GM13976 (cell line): ENCODE measurements at regions of chr5 and their contacts with region 1.

Region 1: GRCh38 chr5:138138949-138139780 is at the start of gene NME5:
- DNase-seq: peak; percentile 79
- CTCF ChIP-seq: no peak

Region 2: GRCh38 chr5:138077065-138077696 is 62.0 kb before region 1 on chr5:
- in situ Hi-C with region 1: loop called (anchors 10 kb)
- DNase-seq: peak; percentile 66
- CTCF ChIP-seq: peak; percentile 78